ENCODE measurements at regions of chr15 and their contacts with region 1.

Region 1: DNA sequence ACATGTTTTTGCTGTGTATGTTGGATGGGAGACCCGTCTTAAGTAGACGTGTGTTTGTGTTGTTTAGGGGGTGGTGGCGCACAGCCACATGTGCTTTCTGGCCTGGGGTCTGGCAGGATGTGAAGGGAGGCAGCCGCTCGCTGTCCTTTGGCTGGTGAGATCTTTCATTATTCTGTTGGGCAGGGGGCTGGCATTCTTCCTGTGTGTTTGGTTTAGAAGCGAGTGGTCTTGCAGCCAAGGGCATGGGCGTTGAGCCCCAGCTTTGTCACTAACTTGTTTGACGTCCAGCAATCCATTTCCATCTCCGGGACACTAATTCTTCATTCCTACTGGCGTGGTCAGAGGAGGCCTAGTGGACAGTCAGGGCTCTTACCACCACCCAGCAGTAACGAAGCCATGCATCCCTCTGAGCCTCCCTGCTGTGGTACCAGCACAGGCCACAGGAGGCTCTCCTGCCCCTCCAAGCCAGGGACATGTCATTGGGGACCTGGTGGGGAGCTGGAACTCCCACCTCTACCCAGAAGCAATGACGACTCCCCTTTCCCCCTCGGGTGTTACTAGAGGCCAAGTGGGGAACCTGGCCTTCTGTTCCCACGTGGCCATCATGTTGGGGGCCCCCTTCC is 10.7 kb downstream of the THSD4 start:
- DNase-seq: no peak
- ATAC-seq: no peak

Region 2: DNA sequence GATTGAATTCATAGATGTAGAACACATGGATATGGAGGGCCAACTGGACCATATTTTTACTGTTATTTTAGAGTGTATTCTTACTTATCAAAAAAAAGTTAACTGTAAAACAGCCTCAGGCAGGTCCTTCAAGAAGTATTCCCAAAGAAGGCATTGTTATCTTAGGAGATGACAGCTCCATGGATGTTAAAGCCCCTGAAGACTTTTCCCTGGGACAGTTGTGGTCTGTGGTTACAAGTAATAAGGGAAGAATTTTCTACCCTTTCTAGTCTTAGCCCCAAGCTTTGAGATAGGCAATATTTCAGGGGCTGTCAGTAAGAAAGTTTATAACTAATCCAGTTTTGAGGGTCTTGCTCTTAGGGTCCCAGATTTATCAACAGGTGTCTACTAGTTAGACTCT is 170.8 kb before region 1 on chr15:
- intact Hi-C with region 1: no loop called
- DNase-seq: no peak
- ATAC-seq: no peak

Region 3: DNA sequence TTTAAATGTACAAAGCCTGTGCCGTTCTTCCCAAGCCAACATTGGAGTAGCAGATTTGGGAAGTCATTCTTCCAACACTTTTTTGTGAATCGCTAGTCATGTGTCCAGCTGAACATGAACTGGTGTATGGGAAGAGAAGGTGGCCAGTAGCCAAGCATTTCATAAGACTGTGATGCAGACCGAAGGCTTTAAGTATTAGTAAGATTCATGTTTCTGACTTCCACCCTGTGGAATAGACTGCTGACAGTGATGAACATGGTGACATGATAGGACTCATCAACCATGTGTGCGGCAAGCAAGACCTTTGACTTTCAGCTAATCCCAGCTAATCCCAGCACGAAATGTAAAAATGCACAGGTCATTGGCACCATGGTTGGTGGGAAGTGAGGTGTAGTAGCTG is 59.0 kb before region 1 on chr15:
- intact Hi-C with region 1: no loop called
- DNase-seq: no peak
- ATAC-seq: peak; percentile 78

Region 4: GRCh38 chr15:71189718-71190117 is 63.8 kb after region 1 on chr15:
- intact Hi-C with region 1: loop called (anchors 5 kb)
- DNase-seq: no peak
- ATAC-seq: no peak

Region 5: DNA sequence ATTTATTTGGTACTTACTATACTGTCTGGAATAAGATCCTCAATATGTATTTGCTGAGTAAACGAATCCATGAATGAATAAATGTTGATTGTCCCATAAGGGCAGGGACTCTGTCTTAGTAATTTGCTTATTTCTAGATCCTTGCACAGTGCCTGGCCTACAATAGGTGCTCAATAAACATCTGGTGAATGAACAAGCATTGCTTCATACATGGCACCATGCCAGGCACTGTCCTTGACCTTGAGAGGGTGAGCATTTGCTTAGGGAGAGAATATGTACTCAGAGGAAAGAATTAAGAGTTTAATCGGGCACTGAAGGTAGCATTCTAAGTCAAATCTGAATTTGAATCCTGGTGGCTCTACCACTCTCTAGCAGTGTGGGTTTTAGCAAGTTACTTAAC is 271.4 kb after region 1 on chr15:
- intact Hi-C with region 1: no loop called
- DNase-seq: no peak
- ATAC-seq: no peak